PC-9 (cell line): ENCODE measurements at regions of chrX and their contacts with region 1.

Region 1: DNA sequence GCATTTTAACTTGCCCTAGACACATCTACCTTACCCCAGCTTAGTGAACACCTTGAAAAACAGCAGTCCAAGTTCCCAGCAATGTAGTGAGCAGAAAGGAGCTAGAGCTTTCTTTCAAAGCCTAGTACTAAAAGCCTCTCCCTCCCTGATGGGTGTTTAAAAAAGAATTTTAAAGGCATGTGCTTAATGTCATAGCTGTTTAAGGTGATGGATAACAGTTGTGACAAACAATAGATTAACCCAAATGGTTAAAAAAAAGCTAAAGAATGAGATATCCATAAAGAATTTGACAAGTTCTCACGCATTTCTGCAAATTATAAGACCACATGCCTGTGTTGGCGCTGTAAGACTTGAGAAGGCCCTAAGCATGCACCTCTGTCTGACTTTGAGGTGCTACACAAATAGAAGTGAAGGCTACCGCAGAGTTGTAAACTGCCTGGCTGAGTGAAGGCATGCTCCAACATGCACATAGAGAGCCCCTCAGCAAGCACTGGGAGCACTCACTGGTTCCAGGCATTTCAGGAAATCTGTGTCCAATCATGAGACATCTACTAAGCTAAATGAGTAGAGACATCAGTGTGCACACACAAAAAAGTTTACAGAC is 94.0 kb downstream of the PHF8 start:
- DNase-seq: no peak
- H3K4me3 ChIP-seq: no peak overlapping the region
- H3K27ac ChIP-seq: no peak overlapping the region
- H3K4me1 ChIP-seq: no peaks in the 10 kb centered on the region
- H3K27me3 ChIP-seq: no peaks in the 10 kb centered on the region
- CTCF ChIP-seq: no peak

Region 2: DNA sequence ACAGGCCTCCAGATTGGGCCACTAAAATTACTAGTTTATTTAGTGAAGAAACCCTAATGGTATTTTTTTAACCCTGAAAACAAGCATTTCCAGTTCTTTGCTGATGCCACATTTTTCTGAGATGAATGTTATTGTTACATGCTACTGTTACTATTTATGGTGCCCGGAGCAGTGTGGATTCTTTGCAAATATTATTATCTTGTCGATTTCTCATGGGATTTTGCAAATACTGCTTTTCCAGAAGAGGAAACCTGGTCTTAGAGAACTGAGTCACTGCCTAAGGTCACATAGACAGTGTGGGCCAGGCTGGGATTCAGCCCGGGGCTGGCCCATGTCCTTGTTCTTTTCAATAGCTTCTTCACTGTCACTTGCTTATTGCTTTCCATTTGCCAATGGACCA is 1089.3 kb after region 1 on chrX:
- CTCF ChIA-PET with region 1: no interaction called
- POLR2A ChIA-PET with region 1: interaction called, 24 read pairs
- intact Hi-C with region 1: no loop called
- DNase-seq: peak in 1 of 2 experiments; percentile 77
- H3K4me3 ChIP-seq: no peak overlapping the region
- H3K27ac ChIP-seq: 0 out of 2 replicates have a peak overlapping the region, but pooled peaks have one; percentile 29
- H3K4me1 ChIP-seq: peaks cover 15% of the 10 kb centered on the region; the same call in 1 of the 2 replicates
- H3K27me3 ChIP-seq: no peaks in the 10 kb centered on the region
- CTCF ChIP-seq: no peak